ENCODE measurements at regions of chr11 and their contacts with region 1.

Region 1: DNA sequence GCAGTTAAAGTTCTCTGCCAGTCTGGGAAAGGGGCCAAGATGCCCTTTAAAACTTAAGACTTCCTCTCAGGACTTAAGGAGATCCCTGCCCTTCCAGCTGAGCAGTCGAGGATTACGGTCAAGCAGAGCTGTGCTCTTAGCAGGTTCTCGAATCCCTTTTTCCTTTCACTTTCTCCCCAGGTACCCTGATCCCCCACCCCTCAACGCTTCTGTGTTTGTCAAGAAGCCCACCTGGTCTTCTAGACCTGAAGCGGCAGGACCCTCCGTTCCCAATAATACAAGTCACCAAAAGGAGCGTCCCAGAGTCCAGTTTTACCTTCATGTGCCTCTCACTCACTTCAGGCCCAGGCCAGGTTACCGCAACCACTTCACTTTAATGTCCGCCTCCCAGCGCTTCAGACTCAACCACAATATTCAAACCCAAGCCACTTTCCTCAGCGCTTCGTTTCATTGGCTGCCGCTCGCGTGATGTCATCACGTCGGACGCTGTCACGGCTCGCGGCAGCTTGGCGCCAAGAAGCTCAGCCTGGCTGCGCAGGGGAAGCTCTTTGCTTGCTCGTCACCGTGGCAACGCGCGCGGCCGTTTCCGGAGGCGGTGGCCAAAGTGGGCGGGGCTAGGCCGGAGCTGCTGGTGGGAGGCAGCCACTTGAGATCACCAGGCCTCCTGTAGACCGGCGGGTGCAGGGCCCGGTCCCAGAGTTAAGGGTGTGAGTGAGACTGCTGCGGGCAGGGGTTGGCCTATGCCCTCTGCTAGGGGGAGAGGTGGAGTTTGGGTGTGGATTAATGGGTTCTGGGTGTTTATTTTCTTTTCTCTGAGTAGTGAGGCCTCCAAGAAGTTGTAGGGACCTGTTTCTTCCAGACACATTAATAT is at the starts of genes KIF18A and METTL15:
- DNase-seq: peak; percentile 100
- H3K4me3 Mint-ChIP-seq: peak within 1 kb of the TSS; percentile 99
- H3K27ac Mint-ChIP-seq: peak within 1 kb of the TSS; percentile 100
- H3K4me1 Mint-ChIP-seq: peaks cover 58% of the 10 kb centered on the region
- H3K27me3 Mint-ChIP-seq: no peaks in the 10 kb centered on the region
- total RNA-seq, gene KIF18A: 15.4 and 15.5 TPM in 2 replicates
- total RNA-seq, gene METTL15: 16.9 and 18.3 TPM in 2 replicates

Region 2: GRCh38 chr11:27362749-27363575 is 745.0 kb before region 1 on chr11 and contains the start of gene CCDC34:
- intact Hi-C with region 1: loop called (anchors 10 kb)
- DNase-seq: peak; percentile 97
- H3K4me3 Mint-ChIP-seq: peak within 1 kb of the TSS; percentile 97
- H3K27ac Mint-ChIP-seq: peak within 1 kb of the TSS; percentile 92
- H3K4me1 Mint-ChIP-seq: peaks cover 21% of the 10 kb centered on the region
- H3K27me3 Mint-ChIP-seq: peaks cover 2% of the 10 kb centered on the region
- total RNA-seq, gene CCDC34: 10.1 and 12.7 TPM in 2 replicates

Region 3: DNA sequence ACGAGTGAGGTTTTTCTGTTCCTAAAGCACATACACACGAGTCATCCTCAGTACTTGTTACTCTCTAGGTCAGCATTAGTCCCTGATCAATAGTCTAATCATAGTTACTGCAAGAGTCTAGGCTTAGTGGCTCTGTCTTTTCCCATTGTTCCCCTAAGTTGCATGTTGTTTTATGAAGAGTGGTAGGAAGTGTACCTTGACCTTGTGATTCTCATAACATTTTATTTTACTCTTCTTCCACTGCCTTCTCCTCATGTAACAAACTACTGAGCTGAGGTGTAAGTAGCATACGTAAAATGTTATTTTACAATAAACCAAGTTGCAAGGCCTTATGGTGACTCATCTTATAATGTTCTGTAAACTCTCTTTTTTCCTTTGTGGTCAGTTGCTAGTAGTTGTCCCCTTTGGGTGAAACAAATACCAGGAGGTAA is 15.2 kb after region 1 on chr11:
- intact Hi-C with region 1: loop called (anchors 1 kb)
- DNase-seq: no peak
- H3K4me3 Mint-ChIP-seq: no peak overlapping the region
- H3K27ac Mint-ChIP-seq: no peak overlapping the region
- H3K4me1 Mint-ChIP-seq: peaks cover 3% of the 10 kb centered on the region
- H3K27me3 Mint-ChIP-seq: no peaks in the 10 kb centered on the region